ENCODE measurements at regions of chr20 and their contacts with region 1.

Region 1: GRCh38 chr20:61896058-61896961 is 169.4 kb downstream of the TAF4 start:
- DNase-seq: no peak
- H3K4me3 ChIP-seq: no peak overlapping the region
- H3K27me3 ChIP-seq: no peaks in the 10 kb centered on the region
- CTCF ChIP-seq: peak; percentile 86

Region 2: DNA sequence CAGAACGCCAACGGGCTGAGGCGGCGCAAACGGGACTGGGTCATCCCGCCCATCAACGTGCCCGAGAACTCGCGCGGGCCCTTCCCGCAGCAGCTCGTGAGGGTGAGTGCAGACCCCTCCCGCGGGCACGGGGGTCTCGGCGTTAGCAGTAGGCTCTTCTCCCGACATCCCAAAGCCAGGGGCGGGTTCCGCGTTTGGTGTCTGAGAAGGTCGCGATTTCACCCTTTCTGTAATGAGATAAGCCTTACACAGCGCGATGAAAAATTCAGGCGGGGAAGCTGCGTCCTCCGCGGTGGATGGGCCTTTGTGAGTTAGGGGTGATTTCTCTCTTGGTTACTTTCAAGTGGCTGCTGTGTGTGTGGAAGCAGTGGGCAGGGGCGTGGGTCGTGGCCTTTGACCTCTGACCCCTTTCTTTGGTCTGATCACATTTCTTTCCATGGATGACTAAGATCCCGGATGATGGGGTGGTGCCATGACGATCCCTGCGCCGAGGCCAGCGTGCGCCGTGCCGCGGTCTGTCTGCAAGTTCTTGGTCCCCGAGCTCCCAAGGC is 123.2 kb before region 1 on chr20:
- CTCF ChIA-PET with region 1: no interaction called
- POLR2A ChIA-PET with region 1: no interaction called
- DNase-seq: no peak
- H3K4me3 ChIP-seq: no peak overlapping the region
- H3K27me3 ChIP-seq: no peaks in the 10 kb centered on the region
- CTCF ChIP-seq: no peak

Region 3: DNA sequence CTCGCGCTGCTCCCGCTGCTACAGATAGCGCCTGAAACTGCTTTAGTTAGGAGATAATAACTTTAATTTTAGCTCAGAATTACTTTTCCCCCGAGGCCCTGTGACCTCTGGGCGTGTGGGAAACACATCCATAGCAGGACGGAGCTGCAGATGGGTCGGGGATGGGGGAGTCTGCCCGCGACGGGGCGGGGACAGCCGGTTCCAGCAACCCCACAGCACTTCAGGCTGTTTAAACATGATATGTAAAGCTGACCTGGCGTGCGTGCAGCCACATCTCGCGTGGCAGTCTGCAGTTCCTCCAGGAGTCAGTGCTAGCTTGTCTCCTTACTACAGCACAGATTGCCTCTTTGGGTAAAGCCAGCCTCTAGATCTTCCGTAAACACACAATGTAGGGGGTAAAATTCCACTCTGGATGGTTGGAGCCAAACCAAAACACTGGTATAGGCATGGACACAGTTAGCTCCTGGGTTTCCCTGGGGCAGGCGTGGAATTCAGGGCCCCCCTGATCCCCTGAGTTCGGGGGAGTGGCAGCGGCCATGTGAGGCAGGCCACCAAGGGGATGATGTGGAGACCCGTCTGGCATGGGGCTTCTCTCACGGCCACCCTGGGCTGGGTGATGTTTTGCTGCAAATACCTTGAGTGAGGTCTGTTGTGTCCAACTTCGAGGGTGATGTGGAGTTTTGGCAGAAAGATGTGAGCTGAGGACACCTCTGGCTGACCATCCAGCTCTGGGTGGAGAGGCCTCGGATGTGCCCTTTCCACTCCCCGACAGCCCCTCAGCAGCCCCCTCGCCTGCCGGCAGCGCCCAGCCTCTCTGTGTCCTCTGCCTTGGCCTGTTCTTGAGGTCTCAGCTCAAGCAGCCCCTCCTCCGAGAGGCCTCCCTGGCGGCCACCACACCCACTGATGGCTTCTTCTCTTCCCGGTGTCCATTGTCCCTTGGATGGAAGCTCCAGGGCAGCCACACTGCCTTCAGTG is 45.1 kb before region 1 on chr20:
- CTCF ChIA-PET with region 1: no interaction called
- POLR2A ChIA-PET with region 1: no interaction called
- DNase-seq: no peak
- H3K4me3 ChIP-seq: no peak overlapping the region
- H3K27me3 ChIP-seq: no peaks in the 10 kb centered on the region
- CTCF ChIP-seq: no peak

Region 4: DNA sequence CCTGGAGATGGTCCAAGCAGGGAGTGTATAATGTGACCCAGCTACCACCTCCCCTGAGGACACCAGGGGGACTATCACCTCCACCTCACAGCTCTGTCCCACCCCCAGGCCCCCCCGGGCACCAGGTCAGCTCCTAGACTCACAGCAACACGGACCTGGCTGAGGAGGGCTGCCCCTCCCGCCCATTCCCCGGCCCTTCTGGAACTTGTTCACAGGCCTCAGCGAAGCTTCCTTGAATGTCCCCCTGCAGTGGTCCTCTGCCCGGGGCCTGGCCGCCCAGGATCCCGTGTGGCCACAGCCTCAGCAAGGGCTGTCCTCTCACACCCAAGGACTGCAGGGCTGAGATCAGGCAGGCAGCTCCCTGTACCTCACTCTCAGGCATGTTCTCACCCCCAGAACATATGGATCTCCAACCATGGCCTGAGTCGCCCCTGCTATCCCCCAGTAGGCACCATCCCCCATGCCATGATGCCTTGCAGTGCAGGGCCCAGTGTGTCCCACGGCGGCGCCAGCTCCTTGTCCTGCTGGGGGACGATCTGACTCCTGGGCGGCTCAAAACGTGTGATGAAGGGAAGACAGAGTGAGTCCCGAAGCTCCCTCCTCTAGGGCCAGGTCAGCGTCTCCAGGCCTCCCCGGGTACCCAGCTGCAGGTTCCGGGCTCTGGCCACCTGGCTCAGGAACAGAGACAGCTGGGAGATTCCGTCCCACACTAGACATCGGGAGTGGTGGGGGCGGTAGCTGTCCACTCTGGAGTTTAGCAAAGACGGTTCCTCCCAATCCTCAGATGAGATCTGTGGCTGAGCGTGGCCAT is 11.0 kb after region 1 on chr20:
- CTCF ChIA-PET with region 1: interaction called, 24 read pairs
- POLR2A ChIA-PET with region 1: no interaction called
- DNase-seq: no peak
- H3K4me3 ChIP-seq: no peak overlapping the region
- H3K27me3 ChIP-seq: no peaks in the 10 kb centered on the region; the same call in 1 of the 2 replicates
- CTCF ChIP-seq: no peak

Region 5: DNA sequence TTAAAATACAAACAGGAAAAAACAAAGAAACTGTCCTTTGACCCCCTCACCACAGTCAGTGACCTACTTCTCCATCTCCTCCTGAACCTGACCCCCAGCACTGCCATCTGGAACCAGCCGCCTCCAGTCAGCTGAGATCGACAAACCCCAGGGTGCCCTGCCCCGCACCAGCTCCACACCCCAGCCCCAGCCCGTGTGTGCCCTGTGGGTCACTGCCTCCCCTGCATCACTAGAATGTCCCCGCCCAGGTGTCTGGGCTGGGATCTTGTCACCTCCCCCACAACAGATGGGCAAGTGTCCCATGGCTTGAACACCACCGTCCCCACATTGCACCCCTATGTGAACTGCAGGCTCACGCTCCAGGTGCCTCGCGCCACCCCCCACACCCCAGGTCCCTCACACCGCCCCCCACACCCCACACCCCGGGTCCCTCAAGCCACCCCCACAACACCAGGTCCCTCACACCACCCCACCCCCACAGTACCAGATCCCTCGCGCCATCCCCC is 156.1 kb after region 1 on chr20:
- CTCF ChIA-PET with region 1: no interaction called
- POLR2A ChIA-PET with region 1: no interaction called
- DNase-seq: no peak
- H3K4me3 ChIP-seq: no peak overlapping the region
- H3K27me3 ChIP-seq: no peaks in the 10 kb centered on the region
- CTCF ChIP-seq: no peak